Activated naive CD4-positive, alpha-beta T cell treated with anti-CD3 and anti-CD28 coated beads for 36 hours (primary cell): ENCODE measurements at regions of chr4 and their contacts with region 1.

Region 1: DNA sequence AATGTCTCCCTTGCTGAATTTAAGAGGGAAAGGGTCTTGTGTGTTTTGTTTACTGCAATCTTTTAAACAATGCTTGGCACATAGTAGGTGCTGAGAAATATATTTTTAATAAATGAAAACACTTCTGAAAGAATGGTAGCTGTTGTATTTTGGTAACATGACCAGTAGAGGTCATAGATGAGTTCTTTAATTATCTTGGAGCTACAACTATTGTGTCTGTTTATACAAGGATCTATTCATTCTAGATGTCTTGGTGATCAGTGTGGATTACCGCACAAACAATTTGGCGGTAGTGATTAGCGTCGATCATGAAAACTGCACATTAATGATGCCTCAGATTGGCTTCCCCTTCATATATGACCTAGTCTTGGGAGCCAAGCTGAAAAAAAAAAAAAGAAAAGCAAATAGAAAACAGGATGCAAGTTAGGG is 21.4 kb upstream of the SCRG1 start:
- DNase-seq: no peak
- H3K4me3 Mint-ChIP-seq: no peak overlapping the region
- H3K27ac Mint-ChIP-seq: no peak overlapping the region
- H3K4me1 Mint-ChIP-seq: peaks cover 4% of the 10 kb centered on the region
- H3K27me3 Mint-ChIP-seq: peaks cover 3% of the 10 kb centered on the region

Region 2: GRCh38 chr4:173146451-173146850 is 273.9 kb before region 1 on chr4:
- CTCF ChIA-PET with region 1: no interaction called
- intact Hi-C with region 1: no loop called
- DNase-seq: no peak
- H3K4me3 Mint-ChIP-seq: no peak overlapping the region
- H3K27ac Mint-ChIP-seq: no peak overlapping the region
- H3K4me1 Mint-ChIP-seq: no peaks in the 10 kb centered on the region
- H3K27me3 Mint-ChIP-seq: no peaks in the 10 kb centered on the region

Region 3: GRCh38 chr4:173288296-173288695 is 132.0 kb before region 1 on chr4:
- CTCF ChIA-PET with region 1: interaction called, 6 read pairs
- intact Hi-C with region 1: loop called (anchors 1 kb)
- DNase-seq: peak; percentile 89
- H3K4me3 Mint-ChIP-seq: no peak overlapping the region
- H3K27ac Mint-ChIP-seq: no peak overlapping the region
- H3K4me1 Mint-ChIP-seq: peaks cover 15% of the 10 kb centered on the region
- H3K27me3 Mint-ChIP-seq: no peaks in the 10 kb centered on the region

Region 4: GRCh38 chr4:173318648-173319211 is 101.6 kb before region 1 on chr4:
- CTCF ChIA-PET with region 1: interaction called, 105 read pairs
- intact Hi-C with region 1: loop called (anchors 1 kb)
- DNase-seq: no peak
- H3K4me3 Mint-ChIP-seq: no peak overlapping the region
- H3K27ac Mint-ChIP-seq: no peak overlapping the region
- H3K4me1 Mint-ChIP-seq: peaks cover 11% of the 10 kb centered on the region
- H3K27me3 Mint-ChIP-seq: no peaks in the 10 kb centered on the region

Region 5: GRCh38 chr4:173494013-173494970 is 74.0 kb after region 1 on chr4:
- CTCF ChIA-PET with region 1: interaction called, 9 read pairs
- intact Hi-C with region 1: loop called (anchors 1 kb)
- DNase-seq: peak; percentile 75
- H3K4me3 Mint-ChIP-seq: peak overlapping the region; percentile 64
- H3K27ac Mint-ChIP-seq: no peak overlapping the region
- H3K4me1 Mint-ChIP-seq: peaks cover 10% of the 10 kb centered on the region
- H3K27me3 Mint-ChIP-seq: peaks cover 32% of the 10 kb centered on the region